ENCODE measurements at regions of chr2 and their contacts with region 1.

Region 1: DNA sequence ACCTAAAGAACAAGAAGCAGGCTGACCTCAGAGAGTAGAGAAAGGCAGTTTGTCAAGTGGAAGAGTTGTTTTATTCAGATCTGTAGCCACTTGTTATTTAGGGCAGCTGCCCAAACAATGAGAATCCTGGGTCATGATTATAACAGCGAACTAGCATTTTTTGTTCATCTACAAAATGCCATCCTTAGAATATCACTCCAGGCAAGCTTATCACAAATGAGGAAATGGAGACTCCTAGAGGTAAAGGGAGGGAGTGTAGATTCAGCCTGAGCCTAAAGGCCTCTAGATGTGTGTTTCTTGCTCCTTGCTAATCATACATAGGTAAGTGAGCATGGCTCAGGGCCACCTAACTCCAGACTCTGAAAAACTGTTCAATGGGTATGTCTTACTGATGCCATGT is 126.1 kb downstream of the HNMT start:
- DNase-seq: peak; percentile 32
- H3K4me3 ChIP-seq: no peak overlapping the region
- H3K27ac ChIP-seq: no peak overlapping the region
- H3K4me1 ChIP-seq: no peaks in the 10 kb centered on the region
- H3K27me3 ChIP-seq: no peaks in the 10 kb centered on the region
- CTCF ChIP-seq: peak; percentile 53

Region 2: GRCh38 chr2:137910641-137911040 is 179.7 kb before region 1 on chr2:
- intact Hi-C with region 1: loop called (anchors 5 kb)
- DNase-seq: no peak
- H3K4me3 ChIP-seq: no peak overlapping the region
- H3K27ac ChIP-seq: no peak overlapping the region
- H3K4me1 ChIP-seq: no peaks in the 10 kb centered on the region
- H3K27me3 ChIP-seq: no peaks in the 10 kb centered on the region
- CTCF ChIP-seq: peak; percentile 68

Region 3: DNA sequence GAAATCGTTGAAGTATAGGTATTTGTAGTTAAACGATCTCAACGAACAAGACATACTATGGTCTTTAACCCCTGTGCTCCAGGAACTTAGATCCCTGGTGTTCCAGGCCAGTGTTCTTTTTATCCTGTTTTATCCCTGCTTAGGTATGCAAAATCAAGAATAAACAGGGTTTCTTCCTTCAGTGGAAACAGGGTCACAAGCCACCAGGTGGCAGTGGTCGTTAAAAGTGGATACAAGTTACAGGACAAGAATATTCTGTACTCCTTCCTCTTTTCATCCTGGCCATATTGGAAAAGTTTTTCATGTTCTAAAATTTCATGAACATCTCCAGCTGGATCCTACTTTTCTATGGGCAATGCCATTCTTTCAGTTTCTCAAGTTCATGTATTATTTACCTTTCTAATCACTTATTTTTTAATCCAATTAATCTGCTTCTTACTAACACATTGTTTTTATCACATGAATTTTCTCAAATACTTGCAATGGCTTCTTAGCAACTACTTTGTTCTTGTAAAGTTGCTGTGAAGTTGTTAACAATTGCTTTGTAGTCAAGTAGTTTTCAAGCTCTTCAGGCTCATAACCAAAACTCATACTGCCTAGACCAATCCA is 142.5 kb before region 1 on chr2:
- intact Hi-C with region 1: loop called (anchors 10 kb)
- DNase-seq: peak; percentile 83
- H3K4me3 ChIP-seq: no peak overlapping the region
- H3K27ac ChIP-seq: peak overlapping the region; percentile 68
- H3K4me1 ChIP-seq: peaks cover 6% of the 10 kb centered on the region
- H3K27me3 ChIP-seq: no peaks in the 10 kb centered on the region
- CTCF ChIP-seq: peak; percentile 44

Region 4: GRCh38 chr2:138147796-138148195 is 57.5 kb after region 1 on chr2:
- intact Hi-C with region 1: no loop called
- DNase-seq: no peak
- H3K4me3 ChIP-seq: no peak overlapping the region
- H3K27ac ChIP-seq: no peak overlapping the region
- H3K4me1 ChIP-seq: no peaks in the 10 kb centered on the region
- H3K27me3 ChIP-seq: no peaks in the 10 kb centered on the region
- CTCF ChIP-seq: no peak

Region 5: GRCh38 chr2:138373993-138374408 is 283.7 kb after region 1 on chr2:
- intact Hi-C with region 1: loop called (anchors 5 kb)
- DNase-seq: no peak
- H3K4me3 ChIP-seq: no peak overlapping the region
- H3K27ac ChIP-seq: no peak overlapping the region
- H3K4me1 ChIP-seq: no peaks in the 10 kb centered on the region
- H3K27me3 ChIP-seq: no peaks in the 10 kb centered on the region
- CTCF ChIP-seq: peak; percentile 42

Region 6: GRCh38 chr2:138787053-138787666 is 696.8 kb after region 1 on chr2:
- intact Hi-C with region 1: loop called (anchors 10 kb)
- DNase-seq: no peak
- H3K4me3 ChIP-seq: no peak overlapping the region
- H3K27ac ChIP-seq: no peak overlapping the region
- H3K4me1 ChIP-seq: no peaks in the 10 kb centered on the region
- H3K27me3 ChIP-seq: peaks cover under 1% of the 10 kb centered on the region
- CTCF ChIP-seq: peak; percentile 52